Vagina (tissue), 2 donors: ENCODE measurements at regions of chr3 and their contacts with region 1.

Region 1: GRCh38 chr3:106619-107018 is 89.9 kb upstream of the CHL1 start:
- DNase-seq: no peak
- H3K4me3 ChIP-seq: no peak overlapping the region
- H3K27ac ChIP-seq: no peak overlapping the region
- H3K4me1 ChIP-seq: no peaks in the 10 kb centered on the region
- H3K27me3 ChIP-seq: no peaks in the 10 kb centered on the region
- CTCF ChIP-seq: no peak
- POLR2A ChIP-seq: no peak

Region 2: DNA sequence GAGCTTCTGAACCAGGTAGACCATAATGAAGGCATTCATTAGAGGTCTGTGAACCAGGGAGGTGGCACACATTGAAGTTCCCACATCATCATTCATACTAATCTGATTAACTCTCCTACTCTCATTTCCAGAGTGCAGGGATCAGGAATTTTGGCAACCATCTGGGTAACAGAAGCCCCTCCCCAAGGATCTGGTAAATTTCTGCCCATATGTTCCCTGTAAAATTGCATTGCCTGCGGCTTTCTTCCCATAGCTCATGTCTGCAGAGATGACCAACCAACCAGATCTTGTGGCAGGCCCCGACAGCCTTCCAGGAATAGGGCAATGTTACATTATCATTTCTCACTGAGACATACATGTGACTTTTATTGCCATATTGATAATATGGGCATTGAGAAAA is 21.4 kb before region 1 on chr3:
- intact Hi-C with region 1: loop called (anchors 2 kb)
- DNase-seq: no peak
- H3K4me3 ChIP-seq: no peak overlapping the region
- H3K27ac ChIP-seq: no peak overlapping the region
- H3K4me1 ChIP-seq: no peaks in the 10 kb centered on the region
- H3K27me3 ChIP-seq: no peaks in the 10 kb centered on the region
- CTCF ChIP-seq: no peak
- POLR2A ChIP-seq: no peak

Region 3: GRCh38 chr3:173886-174285 is 67.3 kb after region 1 on chr3:
- intact Hi-C with region 1: no loop called
- DNase-seq: no peak
- H3K4me3 ChIP-seq: no peak overlapping the region
- H3K27ac ChIP-seq: no peak overlapping the region
- H3K4me1 ChIP-seq: no peaks in the 10 kb centered on the region
- H3K27me3 ChIP-seq: no peaks in the 10 kb centered on the region
- CTCF ChIP-seq: no peak
- POLR2A ChIP-seq: no peak